ENCODE measurements at regions of chr11 and their contacts with region 1.

Region 1: DNA sequence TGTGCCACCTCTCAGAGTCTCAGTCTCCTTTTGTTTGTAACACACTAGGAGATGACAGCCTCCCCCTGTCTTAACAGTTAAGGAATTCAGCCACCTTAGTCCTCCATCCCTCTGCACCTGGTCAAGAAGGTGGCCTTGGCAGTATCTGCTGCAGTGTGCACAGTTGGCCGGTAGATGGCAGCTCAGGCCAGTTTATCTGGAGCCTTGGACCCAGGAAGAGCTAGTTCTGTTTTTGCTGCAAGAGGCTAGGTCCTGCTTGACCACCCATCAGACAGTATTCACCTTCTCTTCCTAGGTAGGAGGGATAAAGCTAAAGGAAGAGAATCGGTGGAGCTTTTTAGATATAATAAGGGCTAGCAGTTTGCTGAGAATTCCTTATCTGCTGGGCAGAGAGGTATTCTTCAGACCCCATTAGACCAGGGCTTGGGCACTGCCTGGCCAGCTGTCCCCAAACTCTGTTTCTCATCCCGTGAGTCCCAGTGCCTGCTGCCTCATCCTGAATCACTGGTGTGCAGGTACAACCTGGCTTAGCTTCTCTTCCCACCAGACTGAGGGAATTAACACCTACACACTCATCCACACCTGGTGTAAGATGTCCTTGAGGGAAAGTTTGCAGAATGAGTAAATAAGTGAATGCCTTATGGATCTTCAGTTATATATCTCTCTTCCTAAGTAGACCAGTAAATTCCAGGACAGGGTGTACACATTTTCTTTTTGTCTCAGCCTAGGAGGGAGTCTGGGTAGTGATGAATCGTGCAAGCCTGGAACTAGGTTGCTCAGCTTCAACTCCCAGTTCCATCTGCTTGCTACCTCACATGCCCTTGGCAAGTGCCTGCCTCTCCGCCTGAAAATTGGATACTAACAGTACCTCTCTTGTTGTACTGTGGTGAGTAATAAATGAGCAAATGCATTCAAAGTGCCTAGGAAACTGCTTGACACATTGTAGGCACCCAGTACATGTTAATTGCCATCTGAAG is 70.8 kb upstream of the NARS2 start:
- DNase-seq: peak; percentile 24 to 70 (median 50)
- ATAC-seq: peak; percentile 67
- H3K4me3 ChIP-seq: no peak overlapping the region
- H3K4me3 Mint-ChIP-seq: peak overlapping the region; percentile 73
- H3K27ac ChIP-seq: no peak overlapping the region
- H3K27ac Mint-ChIP-seq: no peak overlapping the region
- H3K4me1 ChIP-seq: no peaks in the 10 kb centered on the region
- H3K4me1 Mint-ChIP-seq: peaks cover 13% of the 10 kb centered on the region
- H3K27me3 ChIP-seq: no peaks in the 10 kb centered on the region
- H3K27me3 Mint-ChIP-seq: peaks cover 2% of the 10 kb centered on the region
- CTCF ChIP-seq: peak; percentile 91

Region 2: GRCh38 chr11:78339945-78340344 is 305.6 kb before region 1 on chr11:
- CTCF ChIA-PET with region 1: no interaction called
- POLR2A ChIA-PET with region 1: no interaction called
- intact Hi-C with region 1: no loop called
- DNase-seq: no peak
- ATAC-seq: no peak
- H3K4me3 ChIP-seq: no peak overlapping the region
- H3K4me3 Mint-ChIP-seq: no peak overlapping the region
- H3K27ac ChIP-seq: no peak overlapping the region
- H3K27ac Mint-ChIP-seq: no peak overlapping the region
- H3K4me1 ChIP-seq: no peaks in the 10 kb centered on the region
- H3K4me1 Mint-ChIP-seq: no peaks in the 10 kb centered on the region
- H3K27me3 ChIP-seq: no peaks in the 10 kb centered on the region
- H3K27me3 Mint-ChIP-seq: peaks cover 11% of the 10 kb centered on the region
- CTCF ChIP-seq: no peak

Region 3: DNA sequence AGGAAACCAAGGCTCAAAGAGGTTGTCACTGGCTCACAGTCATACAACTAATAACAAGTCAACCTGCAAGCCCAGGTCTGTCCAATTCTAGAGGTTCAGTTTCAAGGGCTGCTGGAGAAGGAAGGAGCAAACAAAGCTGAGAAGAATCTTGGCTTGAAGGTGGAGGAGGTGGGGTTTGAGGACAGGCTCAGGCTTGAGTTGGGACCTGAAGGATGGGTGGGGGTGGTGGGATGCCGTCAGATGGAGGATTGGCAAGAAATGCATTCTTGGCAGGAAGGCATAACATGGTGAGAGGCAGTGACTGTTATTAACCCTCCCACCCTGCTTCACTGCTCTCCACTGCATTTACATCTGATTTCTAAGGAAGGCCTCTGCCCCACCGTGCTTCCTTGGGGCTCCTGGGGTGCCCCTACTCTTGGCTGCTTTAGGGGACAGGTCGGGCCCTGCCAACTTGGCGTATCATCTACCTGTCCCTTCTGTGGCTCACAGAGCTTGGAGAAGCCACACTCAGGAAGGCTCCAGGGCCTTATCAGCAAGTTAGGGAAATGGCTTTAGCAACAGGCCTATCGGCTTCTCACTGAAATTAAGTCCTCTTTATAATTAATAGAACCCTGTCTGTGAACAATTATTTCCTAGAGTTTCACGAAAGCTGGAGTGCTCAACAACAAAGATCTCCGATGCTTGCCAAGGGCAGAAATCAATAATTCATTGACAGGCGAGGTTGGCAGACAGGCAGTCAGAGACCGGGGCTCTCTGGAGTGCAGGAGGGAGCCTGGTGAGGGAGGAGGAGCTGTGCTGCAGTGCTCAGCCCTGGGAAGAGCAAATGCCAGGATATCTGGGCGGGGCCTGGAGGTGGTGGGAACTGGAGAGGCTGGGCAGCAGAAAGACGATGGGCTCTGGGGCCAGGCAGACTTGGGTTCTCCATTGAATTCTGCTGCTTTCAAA is 14.1 kb after region 1 on chr11:
- CTCF ChIA-PET with region 1: interaction called, 87 read pairs
- POLR2A ChIA-PET with region 1: no interaction called
- intact Hi-C with region 1: no loop called
- DNase-seq: peak in 1 of 9 experiments; percentile 32
- ATAC-seq: no peak
- H3K4me3 ChIP-seq: no peak overlapping the region
- H3K4me3 Mint-ChIP-seq: no peak overlapping the region
- H3K27ac ChIP-seq: no peak overlapping the region
- H3K27ac Mint-ChIP-seq: no peak overlapping the region
- H3K4me1 ChIP-seq: no peaks in the 10 kb centered on the region
- H3K4me1 Mint-ChIP-seq: no peaks in the 10 kb centered on the region
- H3K27me3 ChIP-seq: no peaks in the 10 kb centered on the region
- H3K27me3 Mint-ChIP-seq: no peaks in the 10 kb centered on the region
- CTCF ChIP-seq: no peak

Region 4: GRCh38 chr11:78676026-78676557 is 30.6 kb after region 1 on chr11:
- CTCF ChIA-PET with region 1: interaction called, 10 read pairs
- POLR2A ChIA-PET with region 1: no interaction called
- intact Hi-C with region 1: no loop called
- DNase-seq: no peak
- ATAC-seq: no peak
- H3K4me3 ChIP-seq: no peak overlapping the region
- H3K4me3 Mint-ChIP-seq: no peak overlapping the region
- H3K27ac ChIP-seq: no peak overlapping the region
- H3K27ac Mint-ChIP-seq: no peak overlapping the region
- H3K4me1 ChIP-seq: no peaks in the 10 kb centered on the region
- H3K4me1 Mint-ChIP-seq: no peaks in the 10 kb centered on the region
- H3K27me3 ChIP-seq: no peaks in the 10 kb centered on the region
- H3K27me3 Mint-ChIP-seq: no peaks in the 10 kb centered on the region
- CTCF ChIP-seq: no peak

Region 5: DNA sequence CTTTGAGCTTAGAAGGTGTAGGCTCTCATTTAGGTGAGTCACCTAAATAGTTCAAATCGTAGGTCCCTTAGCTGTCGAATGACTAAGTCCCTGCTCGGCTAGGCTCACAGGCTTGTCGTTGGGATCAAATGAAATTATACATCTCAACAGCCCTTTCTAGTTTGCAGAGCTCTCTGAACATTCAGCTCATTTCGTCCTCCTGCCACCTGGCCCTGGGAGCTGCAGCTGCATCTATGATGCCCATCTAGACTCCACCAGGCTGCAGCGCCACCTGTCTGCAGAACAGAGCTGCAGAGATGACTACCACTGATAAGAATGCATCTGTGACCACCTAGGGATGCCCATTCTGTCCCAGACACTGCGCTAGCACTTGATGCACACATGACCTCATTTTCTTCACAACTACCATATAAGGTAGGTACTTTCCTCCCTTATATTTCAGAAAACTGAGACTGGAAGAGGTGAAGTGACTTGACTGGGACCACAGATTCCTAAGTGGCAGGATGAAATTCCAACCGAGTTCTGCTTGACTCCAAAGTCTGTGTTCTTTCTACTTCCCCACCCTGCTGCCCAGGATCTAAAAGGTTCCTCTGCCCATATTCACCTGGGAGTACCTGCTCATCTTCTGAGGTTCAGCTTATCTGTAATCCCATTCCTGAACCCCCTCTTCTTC is 70.3 kb after region 1 on chr11:
- CTCF ChIA-PET with region 1: interaction called, 15 read pairs
- POLR2A ChIA-PET with region 1: no interaction called
- intact Hi-C with region 1: loop called (anchors 5 to 10 kb)
- DNase-seq: peak in 3 of 9 experiments; percentile 8 to 26 (median 21)
- ATAC-seq: no peak
- H3K4me3 ChIP-seq: no peak overlapping the region
- H3K4me3 Mint-ChIP-seq: no peak overlapping the region
- H3K27ac ChIP-seq: no peak overlapping the region
- H3K27ac Mint-ChIP-seq: no peak overlapping the region
- H3K4me1 ChIP-seq: no peaks in the 10 kb centered on the region
- H3K4me1 Mint-ChIP-seq: no peaks in the 10 kb centered on the region
- H3K27me3 ChIP-seq: no peaks in the 10 kb centered on the region
- H3K27me3 Mint-ChIP-seq: no peaks in the 10 kb centered on the region
- CTCF ChIP-seq: peak; percentile 38

Region 6: DNA sequence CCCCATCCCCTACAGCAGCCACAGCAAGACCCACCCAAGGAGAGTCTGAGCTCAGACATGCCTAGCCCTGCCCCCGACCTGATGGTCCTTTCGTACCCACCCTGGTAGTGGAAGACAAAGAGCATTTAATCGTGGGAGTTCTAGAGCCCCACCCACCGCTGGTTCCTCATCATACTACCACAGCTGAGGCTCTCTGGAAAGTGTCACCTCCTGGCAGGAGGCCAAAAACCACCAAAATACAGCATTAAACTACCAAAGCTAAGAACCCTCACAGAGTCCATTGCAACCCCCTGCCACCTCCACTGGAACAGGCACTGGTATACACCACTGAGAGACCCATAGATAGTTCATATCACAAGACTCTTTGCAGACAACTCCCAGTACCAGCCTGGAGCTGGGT is 484.2 kb after region 1 on chr11:
- CTCF ChIA-PET with region 1: no interaction called
- POLR2A ChIA-PET with region 1: no interaction called
- intact Hi-C with region 1: no loop called
- DNase-seq: no peak
- ATAC-seq: no peak
- H3K4me3 ChIP-seq: no peak overlapping the region
- H3K4me3 Mint-ChIP-seq: no peak overlapping the region
- H3K27ac ChIP-seq: no peak overlapping the region
- H3K27ac Mint-ChIP-seq: no peak overlapping the region
- H3K4me1 ChIP-seq: no peaks in the 10 kb centered on the region
- H3K4me1 Mint-ChIP-seq: no peaks in the 10 kb centered on the region
- H3K27me3 ChIP-seq: no peaks in the 10 kb centered on the region
- H3K27me3 Mint-ChIP-seq: peaks cover 3% of the 10 kb centered on the region
- CTCF ChIP-seq: no peak

Region 7: GRCh38 chr11:79493555-79494171 is 848.1 kb after region 1 on chr11:
- CTCF ChIA-PET with region 1: interaction called, 4 read pairs
- POLR2A ChIA-PET with region 1: no interaction called
- intact Hi-C with region 1: loop called in 1 of 2 experiments (anchors 10 kb)
- DNase-seq: peak in 4 of 9 experiments; percentile 3 to 27 (median 17)
- ATAC-seq: no peak
- H3K4me3 ChIP-seq: no peak overlapping the region
- H3K4me3 Mint-ChIP-seq: no peak overlapping the region
- H3K27ac ChIP-seq: no peak overlapping the region
- H3K27ac Mint-ChIP-seq: no peak overlapping the region
- H3K4me1 ChIP-seq: no peaks in the 10 kb centered on the region
- H3K4me1 Mint-ChIP-seq: no peaks in the 10 kb centered on the region
- H3K27me3 ChIP-seq: no peaks in the 10 kb centered on the region
- H3K27me3 Mint-ChIP-seq: peaks cover 6% of the 10 kb centered on the region
- CTCF ChIP-seq: peak; percentile 23

Measured in CD8-positive, alpha-beta T cell (primary cell).